Heart right ventricle (tissue), 16 donors: ENCODE measurements at regions of chr1 and their contacts with region 1.

Region 1: GRCh38 chr1:25150985-25151495 is 81.3 kb downstream of the SYF2 start:
- DNase-seq: no peak
- ATAC-seq: no peak
- H3K4me3 ChIP-seq: no peak overlapping the region
- H3K27ac ChIP-seq: no peak overlapping the region
- H3K4me1 ChIP-seq: no peaks in the 10 kb centered on the region
- H3K27me3 ChIP-seq: peaks cover 0 to 59% (median 35%) of the 10 kb centered on the region in 7 donors
- CTCF ChIP-seq: no peak

Region 2: GRCh38 chr1:24468685-24469316 is 682.2 kb before region 1 on chr1:
- intact Hi-C with region 1: loop called in 1 of 10 experiments (anchors 5 kb)
- DNase-seq: no peak
- ATAC-seq: no peak
- H3K4me3 ChIP-seq: no peak overlapping the region
- H3K27ac ChIP-seq: no peak overlapping the region
- H3K4me1 ChIP-seq: no peaks in the 10 kb centered on the region
- H3K27me3 ChIP-seq: no peaks in the 10 kb centered on the region
- CTCF ChIP-seq: no peak

Region 3: GRCh38 chr1:25204797-25205480 is 53.9 kb after region 1 on chr1:
- intact Hi-C with region 1: no loop called
- DNase-seq: no peak
- ATAC-seq: peak in 1 of 8 donors; percentile 45
- H3K4me3 ChIP-seq: no peak overlapping the region
- H3K27ac ChIP-seq: no peak overlapping the region
- H3K4me1 ChIP-seq: peaks cover 0 to 2% (median 0%) of the 10 kb centered on the region in 9 donors
- H3K27me3 ChIP-seq: peaks cover 0 to 17% (median 2%) of the 10 kb centered on the region in 7 donors
- CTCF ChIP-seq: peak; percentile 60 to 84 (median 80)

Region 4: GRCh38 chr1:25392841-25393240 is 241.8 kb after region 1 on chr1:
- intact Hi-C with region 1: no loop called
- DNase-seq: no peak
- ATAC-seq: no peak
- H3K4me3 ChIP-seq: no peak overlapping the region
- H3K27ac ChIP-seq: no peak overlapping the region
- H3K4me1 ChIP-seq: peaks cover 0 to 3% (median 0%) of the 10 kb centered on the region in 9 donors
- H3K27me3 ChIP-seq: no peaks in the 10 kb centered on the region
- CTCF ChIP-seq: no peak